Calu3 (cell line): ENCODE measurements at regions of chr4 and their contacts with region 1.

Region 1: DNA sequence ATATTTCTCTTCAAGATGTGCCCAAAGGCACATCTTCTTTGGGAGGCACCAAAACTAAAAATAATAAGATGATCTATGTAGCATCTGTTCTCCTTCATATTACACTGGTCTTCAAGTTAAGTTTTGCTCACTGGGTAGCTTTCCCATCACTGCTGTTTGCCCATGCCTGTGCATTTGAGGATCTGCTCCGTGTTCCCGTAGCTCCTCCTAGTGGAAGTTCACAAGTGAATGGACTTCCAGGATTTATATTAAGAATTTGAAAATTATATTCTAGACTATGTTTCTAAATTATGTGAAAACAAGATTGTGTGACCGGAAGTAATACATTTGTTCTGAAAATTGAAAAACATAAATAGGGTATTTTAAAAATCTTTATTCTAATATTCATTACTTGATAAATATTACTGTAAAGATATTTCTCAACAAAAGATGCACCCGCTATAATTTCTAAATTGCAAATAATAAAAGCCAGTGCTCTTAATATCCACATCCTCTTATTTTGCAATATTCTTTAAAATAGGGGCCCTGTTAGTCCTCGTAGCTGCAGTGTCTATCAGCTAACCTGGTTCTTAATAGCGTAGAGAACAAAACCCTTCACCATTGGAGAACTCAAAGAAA is 147.7 kb downstream of the RBM46 start:
- DNase-seq: peak; percentile 34
- H3K4me3 Mint-ChIP-seq: no peak overlapping the region
- H3K27ac Mint-ChIP-seq: no peak overlapping the region
- H3K4me1 Mint-ChIP-seq: no peaks in the 10 kb centered on the region
- H3K27me3 Mint-ChIP-seq: no peaks in the 10 kb centered on the region
- CTCF ChIP-seq: peak; percentile 37

Region 2: DNA sequence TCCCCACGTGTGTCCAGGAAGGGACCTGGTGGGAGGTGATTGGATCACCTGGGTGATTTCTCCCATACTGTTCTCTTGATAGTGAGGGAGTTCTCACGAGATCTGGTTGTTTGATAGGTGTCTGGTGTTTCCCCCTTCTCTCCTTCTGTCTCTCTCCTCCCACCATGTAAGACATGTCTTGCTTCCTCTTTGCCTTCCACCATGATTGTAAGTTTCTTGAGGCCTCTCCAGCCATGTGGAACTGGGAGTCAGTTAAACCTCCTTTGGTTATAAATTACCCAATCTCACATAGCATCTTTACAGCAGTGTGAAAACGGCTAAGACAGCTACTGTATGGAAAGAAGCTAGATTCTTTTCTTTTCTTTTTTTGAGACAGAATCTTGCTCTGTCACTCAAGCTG is 294.7 kb before region 1 on chr4:
- CTCF ChIA-PET with region 1: no interaction called
- intact Hi-C with region 1: loop called (anchors 10 kb)
- DNase-seq: no peak
- H3K4me3 Mint-ChIP-seq: no peak overlapping the region
- H3K27ac Mint-ChIP-seq: no peak overlapping the region
- H3K4me1 Mint-ChIP-seq: peaks cover 12% of the 10 kb centered on the region
- H3K27me3 Mint-ChIP-seq: no peaks in the 10 kb centered on the region
- CTCF ChIP-seq: no peak

Region 3: DNA sequence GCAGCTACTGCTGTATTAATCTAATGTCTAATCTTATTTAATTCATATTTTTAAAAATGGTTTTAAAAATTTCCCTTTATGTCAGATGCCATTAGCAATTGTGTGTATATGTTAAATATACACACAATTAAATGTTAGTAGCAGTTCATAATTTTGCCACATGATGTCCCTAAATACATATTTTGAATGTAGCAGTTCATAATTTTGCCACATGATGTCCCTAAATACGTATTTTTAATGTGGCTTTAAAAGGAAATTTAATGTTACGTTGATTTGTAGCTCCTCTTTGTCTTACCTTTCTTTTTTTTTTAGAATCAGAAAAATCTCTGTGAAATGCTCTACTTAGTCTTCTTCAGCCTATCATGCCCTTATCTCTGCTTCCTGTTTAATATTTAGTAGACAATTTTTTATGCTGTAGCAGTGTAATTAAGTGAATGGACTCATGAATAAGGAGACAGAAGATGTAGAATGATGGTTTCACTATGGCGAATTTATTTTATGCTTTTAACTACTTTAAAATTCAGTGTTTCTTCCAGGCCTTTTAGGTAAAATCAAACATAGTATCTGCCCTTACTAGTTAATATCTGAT is 121.6 kb before region 1 on chr4:
- CTCF ChIA-PET with region 1: no interaction called
- intact Hi-C with region 1: loop called (anchors 1 kb)
- DNase-seq: no peak
- H3K4me3 Mint-ChIP-seq: no peak overlapping the region
- H3K27ac Mint-ChIP-seq: no peak overlapping the region
- H3K4me1 Mint-ChIP-seq: no peaks in the 10 kb centered on the region
- H3K27me3 Mint-ChIP-seq: no peaks in the 10 kb centered on the region
- CTCF ChIP-seq: peak; percentile 48